Adrenal gland (tissue), 19 donors: ENCODE measurements at regions of chr4 and their contacts with region 1.

Region 1: DNA sequence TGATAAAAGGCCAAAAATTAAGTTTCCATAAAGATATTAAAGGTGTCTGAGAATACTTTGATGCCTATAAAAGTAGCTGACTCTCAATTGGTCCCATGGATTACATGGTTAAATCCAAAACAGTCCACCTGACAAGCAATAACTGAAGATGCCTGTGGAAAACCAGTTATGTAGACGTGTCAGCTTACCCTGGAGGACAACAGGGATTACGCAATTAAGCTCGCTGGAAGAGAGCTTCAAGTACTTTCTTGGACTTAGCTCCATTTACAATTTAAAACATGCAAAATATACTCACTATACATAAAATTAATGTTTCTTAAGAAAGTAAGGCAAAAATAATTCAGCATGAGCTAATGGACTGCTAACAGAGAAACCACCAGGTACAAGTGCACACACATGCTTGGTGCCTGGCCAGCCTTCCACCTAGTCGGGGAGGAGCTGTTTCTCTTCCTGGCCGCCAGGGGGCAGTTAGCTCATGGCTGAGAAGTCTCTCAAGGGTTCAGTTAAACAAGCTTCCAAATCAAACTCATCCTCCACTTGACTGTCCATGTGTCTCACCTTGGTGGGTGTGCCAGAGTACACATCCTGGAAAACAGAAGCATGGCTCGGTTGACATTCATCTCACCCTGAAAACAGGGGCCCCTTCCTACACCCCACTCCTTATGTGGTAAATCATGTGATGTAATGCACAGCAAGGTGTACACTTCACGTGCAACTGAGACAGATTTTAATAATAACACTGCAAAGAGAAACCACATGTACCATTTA is 9.2 kb upstream of the FAM53A start:
- DNase-seq: peak; percentile 69 to 86 (median 76)
- H3K4me3 ChIP-seq: no peak overlapping the region
- H3K27ac ChIP-seq: no peak overlapping the region
- H3K4me1 ChIP-seq: no peaks in the 10 kb centered on the region
- H3K27me3 ChIP-seq: no peaks in the 10 kb centered on the region
- CTCF ChIP-seq: peak; percentile 83 to 93 (median 86)
- POLR2A ChIP-seq: no peak

Region 2: GRCh38 chr4:1654216-1654955 is 38.9 kb before region 1 on chr4:
- intact Hi-C with region 1: no loop called
- DNase-seq: no peak
- H3K4me3 ChIP-seq: no peak overlapping the region
- H3K27ac ChIP-seq: no peak overlapping the region
- H3K4me1 ChIP-seq: no peaks in the 10 kb centered on the region
- H3K27me3 ChIP-seq: no peaks in the 10 kb centered on the region
- CTCF ChIP-seq: no peak
- POLR2A ChIP-seq: no peak

Region 3: DNA sequence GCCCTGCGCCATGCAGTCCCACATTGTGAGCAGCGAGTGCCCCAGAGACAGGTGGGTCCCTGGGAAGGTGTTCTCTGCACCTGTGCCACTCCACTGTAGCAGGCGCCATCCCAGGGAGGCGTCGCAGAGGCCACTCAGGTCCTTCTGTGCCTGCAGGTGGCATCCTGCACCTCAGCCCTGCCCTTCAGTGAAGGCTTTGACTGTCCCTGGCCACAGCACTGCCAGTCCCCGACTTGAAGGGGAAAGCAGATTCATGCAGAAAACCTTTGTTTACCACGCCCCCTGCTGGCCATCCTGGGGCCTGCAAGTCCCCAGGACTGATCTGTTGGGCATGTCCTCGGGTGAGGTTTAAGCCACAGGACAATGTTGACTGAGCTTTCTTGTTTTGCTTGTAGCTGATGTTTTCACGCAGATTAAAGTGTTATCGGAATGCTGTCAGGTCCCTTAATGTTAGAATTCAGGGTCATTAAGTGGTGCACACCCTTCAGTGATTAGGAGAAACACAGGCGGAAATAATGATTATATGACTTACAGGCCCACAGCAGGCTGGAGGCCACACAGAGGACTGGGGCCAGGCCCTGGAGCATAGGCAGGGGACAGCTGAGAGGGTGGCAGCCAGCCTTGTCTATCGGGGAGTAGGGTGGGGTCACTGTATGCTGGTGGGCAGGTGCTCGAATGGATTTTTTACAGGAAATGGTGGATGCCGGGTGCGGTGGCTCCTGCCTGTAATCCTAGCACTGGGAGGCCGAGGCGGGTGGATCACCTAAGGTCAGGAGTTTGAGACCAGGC is 33.0 kb after region 1 on chr4:
- intact Hi-C with region 1: loop called (anchors 5 kb)
- DNase-seq: peak; percentile 84 to 98 (median 94)
- H3K4me3 ChIP-seq: no peak overlapping the region
- H3K27ac ChIP-seq: peak overlapping the region in 1 of 5 donors; percentile 39
- H3K4me1 ChIP-seq: peaks cover 6 to 13% of the 10 kb centered on the region in 2 donors
- H3K27me3 ChIP-seq: no peaks in the 10 kb centered on the region
- CTCF ChIP-seq: peak; percentile 91 to 99 (median 94)
- POLR2A ChIP-seq: peak in 1 of 2 donors; percentile 8